Ovary (tissue), 10 donors: ENCODE measurements at regions of chr10 and their contacts with region 1.

Region 1: DNA sequence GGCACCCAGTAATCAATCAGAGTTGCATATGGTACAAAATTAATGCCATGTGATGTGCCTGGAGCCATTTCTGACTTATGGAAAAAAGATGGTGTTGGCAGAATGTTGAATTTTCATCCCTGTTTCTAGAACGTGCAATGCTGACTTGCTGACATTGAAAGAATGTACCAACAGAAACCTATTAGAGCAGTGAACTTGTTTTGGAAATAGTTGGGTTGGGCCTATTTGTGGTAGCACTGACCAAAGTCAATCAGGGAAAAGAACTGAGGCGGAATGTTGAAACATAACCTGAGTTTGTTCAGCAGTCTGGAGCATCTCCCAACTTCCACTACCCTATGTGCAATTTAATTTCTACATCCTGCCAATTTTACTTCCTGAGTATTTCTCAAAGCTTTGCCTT is 11.7 kb upstream of the KIAA1217 start:
- DNase-seq: no peak
- H3K4me3 ChIP-seq: no peak overlapping the region
- H3K27ac ChIP-seq: no peak overlapping the region
- H3K4me1 ChIP-seq: no peaks in the 10 kb centered on the region
- H3K27me3 ChIP-seq: no peaks in the 10 kb centered on the region
- CTCF ChIP-seq: no peak
- EP300 ChIP-seq: no peak
- POLR2A ChIP-seq: no peak

Region 2: GRCh38 chr10:23994479-23995046 is 202.7 kb before region 1 on chr10:
- intact Hi-C with region 1: loop called (anchors 2 to 10 kb)
- DNase-seq: peak; percentile 36 to 66 (median 59)
- H3K4me3 ChIP-seq: no peak overlapping the region
- H3K27ac ChIP-seq: no peak overlapping the region
- H3K4me1 ChIP-seq: no peaks in the 10 kb centered on the region
- H3K27me3 ChIP-seq: no peaks in the 10 kb centered on the region
- CTCF ChIP-seq: peak in 2 of 3 donors; percentile 65 to 88
- EP300 ChIP-seq: no peak
- POLR2A ChIP-seq: no peak

Region 3: GRCh38 chr10:24349379-24350001 is 152.2 kb after region 1 on chr10:
- intact Hi-C with region 1: loop called in 1 of 4 experiments (anchors 10 kb)
- DNase-seq: no peak
- H3K4me3 ChIP-seq: no peak overlapping the region
- H3K27ac ChIP-seq: peak overlapping the region in 1 of 2 donors; percentile 14
- H3K4me1 ChIP-seq: peaks cover 3% of the 10 kb centered on the region
- H3K27me3 ChIP-seq: no peaks in the 10 kb centered on the region
- CTCF ChIP-seq: no peak
- EP300 ChIP-seq: no peak
- POLR2A ChIP-seq: no peak

Region 4: GRCh38 chr10:24360282-24361127 is 163.2 kb after region 1 on chr10:
- intact Hi-C with region 1: loop called in 2 of 4 experiments (anchors 2 to 10 kb)
- DNase-seq: peak; percentile 69 to 84 (median 81)
- H3K4me3 ChIP-seq: no peak overlapping the region
- H3K27ac ChIP-seq: no peak overlapping the region
- H3K4me1 ChIP-seq: no peaks in the 10 kb centered on the region
- H3K27me3 ChIP-seq: no peaks in the 10 kb centered on the region
- CTCF ChIP-seq: peak; percentile 53 to 60 (median 57)
- EP300 ChIP-seq: no peak
- POLR2A ChIP-seq: no peak

Region 5: GRCh38 chr10:24449321-24449740 is 252.1 kb after region 1 on chr10:
- intact Hi-C with region 1: no loop called
- DNase-seq: no peak
- H3K4me3 ChIP-seq: peak overlapping the region; percentile 18
- H3K27ac ChIP-seq: no peak overlapping the region
- H3K4me1 ChIP-seq: peaks cover 10% of the 10 kb centered on the region
- H3K27me3 ChIP-seq: no peaks in the 10 kb centered on the region
- CTCF ChIP-seq: no peak
- EP300 ChIP-seq: no peak
- POLR2A ChIP-seq: no peak